ENCODE measurements at regions of chr3 and their contacts with region 1.

Region 1: DNA sequence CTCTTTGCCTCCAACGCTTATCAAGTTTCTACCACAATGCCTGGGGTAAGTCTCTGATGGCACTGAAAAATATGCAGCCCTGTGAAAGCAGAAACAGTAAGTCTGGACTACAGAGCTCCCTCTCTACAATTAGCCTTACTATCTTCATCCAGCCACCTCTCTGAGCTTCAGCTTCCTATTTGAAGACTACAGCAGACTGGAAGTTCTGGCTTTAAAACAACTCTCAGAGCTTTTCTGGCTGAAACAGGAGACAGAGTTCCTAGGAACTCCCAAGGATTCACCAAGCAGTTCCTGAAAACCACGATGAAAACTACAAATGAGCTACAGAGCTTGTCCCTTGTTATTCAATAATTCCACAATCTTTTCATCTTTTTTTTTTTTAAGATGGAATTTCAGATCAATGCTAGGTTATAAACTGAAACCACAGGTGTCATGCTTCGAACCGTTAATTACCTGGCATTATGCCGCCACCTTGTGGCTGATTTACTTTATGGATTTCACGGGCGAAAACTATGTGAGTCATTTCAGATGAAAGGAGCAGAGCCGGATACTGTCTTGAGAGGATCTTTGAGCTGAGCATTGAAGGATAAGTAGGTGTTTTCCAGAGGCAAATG is 3.9 kb downstream of the CRYGS start:
- DNase-seq: peak; percentile 49
- CTCF ChIP-seq: peak; percentile 71

Region 2: DNA sequence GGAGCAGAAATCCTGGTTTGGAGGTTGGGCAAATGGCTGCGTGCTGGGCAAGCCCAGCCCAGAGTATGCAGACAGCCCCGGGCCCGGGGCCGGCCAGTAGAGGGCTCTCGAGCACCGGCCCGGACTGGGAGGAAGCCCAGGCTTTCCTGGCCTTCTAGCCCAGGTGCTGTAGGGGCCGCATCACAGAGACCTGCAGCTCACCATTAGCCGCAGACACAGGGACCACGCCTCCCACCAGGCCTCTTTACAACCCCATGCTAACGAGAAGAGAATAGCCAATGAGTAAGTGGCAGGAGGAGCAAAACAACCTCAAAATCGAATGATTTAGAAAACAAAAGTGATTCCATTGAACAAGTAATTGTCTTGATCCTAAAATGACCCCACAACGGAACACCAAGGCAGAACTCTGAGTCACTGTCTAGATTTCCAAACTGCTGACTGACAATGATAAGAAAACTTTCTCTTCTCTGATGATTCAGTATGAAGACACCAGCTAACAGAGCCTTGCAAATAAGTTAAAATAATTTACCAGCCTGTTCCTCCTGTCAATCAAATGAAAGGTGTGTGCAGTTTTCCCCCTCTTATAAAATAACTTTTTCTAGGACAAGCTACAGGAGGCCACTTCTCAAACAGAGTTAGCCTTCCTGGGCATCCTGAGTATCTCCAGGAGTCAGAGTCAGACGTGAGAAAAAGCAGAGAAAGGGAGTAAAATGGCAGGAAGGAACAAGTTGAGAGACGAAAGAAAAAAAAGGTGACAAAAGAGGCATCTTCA is 280.5 kb before region 1 on chr3:
- in situ Hi-C with region 1: loop called (anchors 5 kb)
- DNase-seq: peak; percentile 79
- CTCF ChIP-seq: peak; percentile 98

Measured in GM13977 (cell line).